CD4-positive, alpha-beta T cell (primary cell): ENCODE measurements at regions of chr14 and their contacts with region 1.

Region 1: GRCh38 chr14:94412671-94413638 is 24.6 kb upstream of the SERPINA1 start:
- DNase-seq: no peak
- ATAC-seq: no peak
- H3K4me3 ChIP-seq: no peak overlapping the region
- H3K4me3 Mint-ChIP-seq: no peak overlapping the region
- H3K27ac ChIP-seq: no peak overlapping the region
- H3K27ac Mint-ChIP-seq: no peak overlapping the region
- H3K4me1 ChIP-seq: no peaks in the 10 kb centered on the region
- H3K4me1 Mint-ChIP-seq: no peaks in the 10 kb centered on the region
- H3K27me3 ChIP-seq: peaks cover 0 to 5% of the 10 kb centered on the region in 2 experiments
- H3K27me3 Mint-ChIP-seq: no peaks in the 10 kb centered on the region
- CTCF ChIP-seq: no peak

Region 2: GRCh38 chr14:94355191-94355797 is 57.7 kb before region 1 on chr14:
- CTCF ChIA-PET with region 1: no interaction called
- POLR2A ChIA-PET with region 1: no interaction called
- intact Hi-C with region 1: loop called in 1 of 2 experiments (anchors 5 kb)
- DNase-seq: peak in 3 of 14 experiments; percentile 20 to 28 (median 27)
- ATAC-seq: no peak
- H3K4me3 ChIP-seq: no peak overlapping the region
- H3K4me3 Mint-ChIP-seq: no peak overlapping the region
- H3K27ac ChIP-seq: no peak overlapping the region
- H3K27ac Mint-ChIP-seq: no peak overlapping the region
- H3K4me1 ChIP-seq: no peaks in the 10 kb centered on the region
- H3K4me1 Mint-ChIP-seq: no peaks in the 10 kb centered on the region
- H3K27me3 ChIP-seq: peaks cover 0 to 3% of the 10 kb centered on the region in 2 experiments
- H3K27me3 Mint-ChIP-seq: no peaks in the 10 kb centered on the region
- CTCF ChIP-seq: no peak

Region 3: DNA sequence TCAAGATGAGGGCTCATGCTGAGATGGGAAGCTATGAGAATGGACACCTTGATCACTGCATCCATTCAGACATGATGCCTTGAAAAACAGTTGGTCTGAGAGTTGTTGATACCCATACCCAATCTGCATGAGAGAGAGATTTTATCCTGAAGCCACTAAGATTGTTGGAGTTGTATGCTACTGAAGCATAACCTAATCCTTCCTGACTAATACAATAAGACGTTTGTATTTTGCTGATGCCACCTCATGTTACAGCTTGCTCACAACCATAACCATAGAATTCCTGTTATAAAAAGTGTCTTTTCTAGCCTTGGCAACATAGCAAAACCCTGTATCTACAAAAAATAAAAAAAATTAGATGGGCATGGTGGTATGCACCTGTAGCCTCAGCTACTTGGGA is 11.9 kb before region 1 on chr14:
- CTCF ChIA-PET with region 1: no interaction called
- POLR2A ChIA-PET with region 1: no interaction called
- intact Hi-C with region 1: no loop called
- DNase-seq: no peak
- ATAC-seq: no peak
- H3K4me3 ChIP-seq: no peak overlapping the region
- H3K4me3 Mint-ChIP-seq: no peak overlapping the region
- H3K27ac ChIP-seq: no peak overlapping the region
- H3K27ac Mint-ChIP-seq: no peak overlapping the region
- H3K4me1 ChIP-seq: no peaks in the 10 kb centered on the region
- H3K4me1 Mint-ChIP-seq: no peaks in the 10 kb centered on the region
- H3K27me3 ChIP-seq: peaks cover 3 to 18% of the 10 kb centered on the region in 2 experiments
- H3K27me3 Mint-ChIP-seq: no peaks in the 10 kb centered on the region
- CTCF ChIP-seq: no peak

Region 4: DNA sequence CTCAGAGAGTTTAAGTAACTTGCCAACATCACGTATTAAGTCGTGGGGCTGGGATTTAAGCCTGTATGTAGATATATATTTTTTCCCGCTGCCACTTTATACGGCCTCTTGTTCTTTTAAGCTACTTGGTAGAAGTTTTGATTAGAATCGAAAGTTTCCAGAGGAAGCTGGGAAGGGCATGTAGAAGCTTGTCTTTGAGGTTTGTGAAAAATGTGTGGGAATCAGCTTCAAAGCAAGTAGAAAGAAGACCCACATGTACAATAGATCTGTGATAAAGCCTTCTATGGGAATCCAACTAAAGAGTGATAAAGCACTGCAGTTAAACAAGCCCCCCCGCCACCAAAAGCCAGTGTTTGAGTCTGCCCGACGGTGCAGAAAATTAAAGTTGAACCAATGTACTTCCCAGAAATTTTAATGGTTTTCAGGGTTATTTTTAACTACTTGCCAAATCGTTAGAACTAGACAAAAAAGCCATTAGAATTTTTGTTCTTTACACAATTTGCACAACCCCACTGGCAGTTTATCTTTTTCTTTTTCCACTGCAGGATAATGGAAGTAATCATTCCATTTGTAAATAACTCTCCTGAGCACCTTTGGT is 14.2 kb after region 1 on chr14:
- CTCF ChIA-PET with region 1: no interaction called
- POLR2A ChIA-PET with region 1: no interaction called
- intact Hi-C with region 1: no loop called
- DNase-seq: no peak
- ATAC-seq: no peak
- H3K4me3 ChIP-seq: no peak overlapping the region
- H3K4me3 Mint-ChIP-seq: no peak overlapping the region
- H3K27ac ChIP-seq: no peak overlapping the region
- H3K27ac Mint-ChIP-seq: no peak overlapping the region
- H3K4me1 ChIP-seq: no peaks in the 10 kb centered on the region
- H3K4me1 Mint-ChIP-seq: peaks cover 5% of the 10 kb centered on the region
- H3K27me3 ChIP-seq: peaks cover 11 to 24% of the 10 kb centered on the region in 2 experiments
- H3K27me3 Mint-ChIP-seq: peaks cover 31% of the 10 kb centered on the region
- CTCF ChIP-seq: no peak

Region 5: GRCh38 chr14:94439453-94440057 is 26.6 kb after region 1 on chr14:
- CTCF ChIA-PET with region 1: no interaction called
- POLR2A ChIA-PET with region 1: no interaction called
- intact Hi-C with region 1: no loop called
- DNase-seq: no peak
- ATAC-seq: no peak
- H3K4me3 ChIP-seq: no peak overlapping the region
- H3K4me3 Mint-ChIP-seq: no peak overlapping the region
- H3K27ac ChIP-seq: no peak overlapping the region
- H3K27ac Mint-ChIP-seq: no peak overlapping the region
- H3K4me1 ChIP-seq: no peaks in the 10 kb centered on the region
- H3K4me1 Mint-ChIP-seq: no peaks in the 10 kb centered on the region
- H3K27me3 ChIP-seq: peaks cover 0 to 4% of the 10 kb centered on the region in 2 experiments
- H3K27me3 Mint-ChIP-seq: peaks cover 32% of the 10 kb centered on the region
- CTCF ChIP-seq: no peak